ENCODE measurements at regions of chr15 and their contacts with region 1.

Region 1: DNA sequence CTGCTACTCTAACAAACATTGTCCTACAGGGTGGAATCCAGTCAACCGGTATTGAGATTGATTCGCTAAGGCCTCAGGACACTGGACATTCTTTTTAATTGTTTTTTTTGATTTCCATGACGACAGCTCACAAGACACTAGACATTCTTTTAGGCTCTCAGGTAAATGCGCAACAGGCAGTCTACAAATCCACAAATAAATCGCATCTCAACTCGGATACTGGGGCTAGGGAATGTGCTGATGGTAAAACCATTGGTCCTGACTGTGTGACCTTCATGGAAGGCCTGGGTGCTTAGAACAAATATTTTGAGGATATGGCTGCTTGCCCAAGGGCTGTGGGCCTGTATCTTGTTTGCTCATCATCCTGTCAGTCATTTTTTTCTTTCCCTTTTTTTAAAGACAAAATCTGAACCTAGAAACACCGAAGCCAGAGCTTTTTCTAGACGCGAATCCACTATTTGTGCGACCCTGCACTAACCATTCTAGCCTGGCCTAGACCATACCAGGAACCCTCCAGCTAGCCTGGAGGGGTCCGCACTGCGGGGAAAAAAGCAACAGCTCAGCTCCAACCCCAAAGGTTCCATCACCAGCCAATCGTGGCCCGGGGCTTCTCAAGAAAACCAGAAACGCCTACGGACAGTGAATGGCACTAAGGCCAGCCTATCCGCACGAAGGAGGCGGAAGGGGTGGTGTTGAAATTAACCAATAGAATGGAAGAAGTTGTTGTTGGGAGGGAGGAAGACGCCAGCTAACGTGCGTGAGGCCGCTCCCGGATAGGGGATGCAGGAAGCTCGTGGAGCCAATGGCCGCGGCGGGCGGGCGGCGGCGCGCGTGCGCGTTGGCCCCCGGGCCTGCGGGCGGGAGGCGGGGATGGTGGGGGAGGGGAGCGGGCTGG is 18.1 kb upstream of the CHD2 start:
- DNase-seq: peak; percentile 100
- H3K4me3 ChIP-seq: peak overlapping the region in 2 of 3 experiments; percentile 49 to 67
- H3K27ac ChIP-seq: peak overlapping the region; percentile 52
- H3K4me1 ChIP-seq: peaks cover 23% of the 10 kb centered on the region
- H3K27me3 ChIP-seq: peaks cover 17 to 20% of the 10 kb centered on the region in 2 experiments
- CTCF ChIP-seq: no peak
- POLR2A ChIP-seq: peak; percentile 52

Region 2: GRCh38 chr15:92808978-92809879 is 72.8 kb before region 1 on chr15:
- CTCF ChIA-PET with region 1: interaction called, 39 read pairs
- POLR2A ChIA-PET with region 1: interaction called, 35 read pairs
- dilution Hi-C with region 1: no loop called
- intact Hi-C with region 1: loop called (anchors 1 kb)
- DNase-seq: peak; percentile 99
- H3K4me3 ChIP-seq: peak overlapping the region; percentile 32 to 51 (median 39)
- H3K27ac ChIP-seq: peak overlapping the region; percentile 88
- H3K4me1 ChIP-seq: peaks cover 16% of the 10 kb centered on the region
- H3K27me3 ChIP-seq: no peaks in the 10 kb centered on the region
- CTCF ChIP-seq: peak; percentile 85 to 100
- POLR2A ChIP-seq: peak; percentile 72

Region 3: GRCh38 chr15:92831655-92832328 is 50.3 kb before region 1 on chr15:
- CTCF ChIA-PET with region 1: interaction called, 5 read pairs
- POLR2A ChIA-PET with region 1: interaction called, 13 read pairs
- dilution Hi-C with region 1: no loop called
- intact Hi-C with region 1: loop called (anchors 1 kb)
- DNase-seq: peak; percentile 96
- H3K4me3 ChIP-seq: peak overlapping the region in 1 of 3 experiments; percentile 22
- H3K27ac ChIP-seq: peak overlapping the region; percentile 54
- H3K4me1 ChIP-seq: peaks cover 18% of the 10 kb centered on the region
- H3K27me3 ChIP-seq: no peaks in the 10 kb centered on the region
- CTCF ChIP-seq: no peak
- POLR2A ChIP-seq: no peak

Region 4: DNA sequence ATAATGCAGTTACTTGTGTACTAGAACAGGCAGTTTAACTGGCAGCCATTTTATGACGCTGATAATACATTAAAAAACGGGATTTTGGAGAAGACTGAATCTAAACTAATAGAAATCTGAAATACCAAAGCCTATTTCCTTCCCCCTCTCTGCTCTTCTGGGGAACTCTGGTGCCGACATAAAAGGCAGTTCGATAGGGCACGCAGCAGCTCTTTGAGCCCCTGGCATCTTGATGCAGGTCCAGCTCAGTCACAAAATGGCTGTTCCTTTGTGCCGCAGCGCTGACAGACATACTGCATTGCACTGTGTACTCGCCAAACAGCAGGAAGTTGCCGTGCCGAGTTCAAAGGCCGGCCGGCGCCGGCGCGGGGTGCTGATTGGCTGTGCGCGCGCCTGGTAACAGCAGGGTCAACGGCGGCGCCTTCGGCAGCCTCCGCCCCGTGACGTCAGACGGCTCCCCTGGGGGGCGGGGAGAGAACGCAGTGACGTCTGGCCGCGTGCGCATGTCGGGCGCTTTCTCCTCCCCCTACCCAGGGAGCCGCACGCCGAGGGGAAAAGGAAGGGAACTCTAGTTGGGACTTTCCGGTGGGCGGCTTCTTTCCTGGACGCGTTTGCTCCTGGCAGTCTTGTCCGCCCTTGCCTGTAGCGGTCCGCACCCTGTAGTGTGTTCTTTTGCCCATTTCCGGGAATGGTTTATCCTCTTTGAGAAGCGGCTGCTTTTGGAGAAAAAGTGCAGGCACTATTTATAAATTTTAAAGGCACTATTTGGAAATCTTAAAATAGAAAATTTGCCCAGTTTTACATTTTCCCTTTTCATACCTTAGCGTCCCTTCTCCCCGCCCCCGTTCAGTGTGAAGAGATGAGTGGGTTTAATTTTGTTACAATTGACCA is 22.1 kb after region 1 on chr15:
- CTCF ChIA-PET with region 1: interaction called, 15 read pairs
- POLR2A ChIA-PET with region 1: interaction called, 52 read pairs
- dilution Hi-C with region 1: no loop called
- intact Hi-C with region 1: loop called (anchors 1 kb)
- DNase-seq: peak; percentile 99
- H3K4me3 ChIP-seq: peak overlapping the region; percentile 64 to 100 (median 97)
- H3K27ac ChIP-seq: peak overlapping the region; percentile 98
- H3K4me1 ChIP-seq: peaks cover 54% of the 10 kb centered on the region
- H3K27me3 ChIP-seq: no peaks in the 10 kb centered on the region
- CTCF ChIP-seq: no peak
- POLR2A ChIP-seq: peak; percentile 95

Region 5: GRCh38 chr15:94607176-94607654 is 1725.2 kb after region 1 on chr15:
- CTCF ChIA-PET with region 1: no interaction called
- POLR2A ChIA-PET with region 1: no interaction called
- dilution Hi-C with region 1: no loop called
- intact Hi-C with region 1: loop called (anchors 5 kb)
- DNase-seq: peak; percentile 96
- H3K4me3 ChIP-seq: no peak overlapping the region
- H3K27ac ChIP-seq: peak overlapping the region; percentile 97
- H3K4me1 ChIP-seq: peaks cover 40% of the 10 kb centered on the region
- H3K27me3 ChIP-seq: no peaks in the 10 kb centered on the region
- CTCF ChIP-seq: no peak
- POLR2A ChIP-seq: peak; percentile 75

Measured in endothelial cell of umbilical vein (primary cell).